SK-N-SH (cell line): ENCODE measurements at regions of chr18 and their contacts with region 1.

Region 1: GRCh38 chr18:23918401-23919032 is 96.0 kb upstream of the TTC39C start:
- DNase-seq: peak; percentile 54
- H3K4me3 ChIP-seq: no peak overlapping the region
- H3K27ac ChIP-seq: peak overlapping the region in 1 of 2 experiments; percentile 53; a peak in 2 of 4 replicates
- H3K4me1 ChIP-seq: no peaks in the 10 kb centered on the region
- H3K27me3 ChIP-seq: no peaks in the 10 kb centered on the region
- CTCF ChIP-seq: peak; percentile 95
- EP300 ChIP-seq: no peak
- RAD21 ChIP-seq: peak; percentile 80

Region 2: GRCh38 chr18:23887493-23887892 is 31.0 kb before region 1 on chr18:
- CTCF ChIA-PET with region 1: interaction called, 19 read pairs
- POLR2A ChIA-PET with region 1: no interaction called
- DNase-seq: peak; percentile 30
- H3K4me3 ChIP-seq: no peak overlapping the region
- H3K27ac ChIP-seq: no peak overlapping the region; a peak in 1 of 4 replicates
- H3K4me1 ChIP-seq: peaks cover 6 to 34% of the 10 kb centered on the region in 2 experiments; a peak in 3 of 4 replicates
- H3K27me3 ChIP-seq: no peaks in the 10 kb centered on the region
- CTCF ChIP-seq: no peak
- EP300 ChIP-seq: peak in 1 of 2 experiments; percentile 47; a peak in 2 of 4 replicates
- RAD21 ChIP-seq: no peak

Region 3: DNA sequence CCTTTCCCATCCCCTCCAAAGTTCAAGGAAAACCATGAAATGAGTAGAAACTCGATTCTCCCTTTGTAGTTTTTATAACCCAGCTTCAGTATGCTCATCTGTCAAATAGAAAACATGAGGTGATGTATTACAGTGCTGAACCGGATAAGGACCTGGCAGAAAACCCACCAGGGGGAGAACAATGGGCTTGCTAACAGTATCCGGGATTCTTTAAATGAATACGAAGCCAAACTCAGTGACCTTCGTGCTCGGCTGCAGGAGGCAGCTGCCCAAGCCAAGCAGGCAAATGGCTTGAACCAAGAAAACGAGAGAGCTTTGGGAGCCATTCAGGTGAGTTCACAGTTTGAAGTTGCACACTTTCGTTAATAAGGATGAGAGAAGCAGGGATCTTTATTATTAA is 17.5 kb before region 1 on chr18:
- CTCF ChIA-PET with region 1: interaction called, 11 read pairs
- POLR2A ChIA-PET with region 1: no interaction called
- DNase-seq: no peak
- H3K4me3 ChIP-seq: no peak overlapping the region
- H3K27ac ChIP-seq: no peak overlapping the region
- H3K4me1 ChIP-seq: no peaks in the 10 kb centered on the region; a peak in 1 of 4 replicates
- H3K27me3 ChIP-seq: no peaks in the 10 kb centered on the region
- CTCF ChIP-seq: no peak
- EP300 ChIP-seq: no peak
- RAD21 ChIP-seq: no peak

Region 4: DNA sequence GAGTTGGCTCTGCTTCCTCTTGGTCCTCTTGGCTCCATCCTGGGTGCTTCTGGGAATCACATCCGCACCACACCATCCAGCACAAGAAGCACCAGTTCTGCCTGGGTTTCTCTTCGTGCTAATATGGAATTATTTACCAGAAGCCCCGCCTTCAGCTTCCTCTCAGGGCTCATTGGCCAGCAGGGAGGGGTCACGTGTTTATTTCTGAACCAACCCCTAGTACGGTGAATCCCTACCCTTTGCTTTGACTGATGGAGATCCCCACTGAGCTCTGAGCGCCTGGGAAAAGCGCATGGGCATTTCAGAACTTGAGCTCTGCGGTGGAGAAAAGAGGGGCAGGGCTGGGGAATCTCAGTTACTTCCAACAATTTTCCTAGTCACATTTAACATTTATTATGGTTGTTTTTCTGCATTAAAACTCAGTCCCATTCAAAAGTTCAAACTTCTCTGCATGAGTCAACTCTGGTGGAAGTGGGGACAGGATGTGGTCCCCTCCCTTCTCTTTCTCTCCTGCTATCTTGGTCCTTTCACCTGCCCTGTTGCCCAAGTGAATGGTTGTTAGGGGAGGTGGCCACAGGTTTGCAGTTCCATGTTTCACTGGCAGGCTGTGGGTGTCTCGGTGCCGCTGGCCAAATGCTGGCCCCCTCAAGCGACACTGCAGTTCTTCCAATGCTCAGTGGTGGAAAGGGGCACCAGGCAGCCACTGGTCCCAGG is 19.7 kb after region 1 on chr18:
- CTCF ChIA-PET with region 1: interaction called, 23 read pairs
- POLR2A ChIA-PET with region 1: no interaction called
- DNase-seq: no peak
- H3K4me3 ChIP-seq: no peak overlapping the region
- H3K27ac ChIP-seq: no peak overlapping the region
- H3K4me1 ChIP-seq: peaks cover 17 to 20% of the 10 kb centered on the region in 2 experiments; a peak in 3 of 4 replicates
- H3K27me3 ChIP-seq: no peaks in the 10 kb centered on the region
- CTCF ChIP-seq: no peak
- EP300 ChIP-seq: no peak
- RAD21 ChIP-seq: no peak

Region 5: DNA sequence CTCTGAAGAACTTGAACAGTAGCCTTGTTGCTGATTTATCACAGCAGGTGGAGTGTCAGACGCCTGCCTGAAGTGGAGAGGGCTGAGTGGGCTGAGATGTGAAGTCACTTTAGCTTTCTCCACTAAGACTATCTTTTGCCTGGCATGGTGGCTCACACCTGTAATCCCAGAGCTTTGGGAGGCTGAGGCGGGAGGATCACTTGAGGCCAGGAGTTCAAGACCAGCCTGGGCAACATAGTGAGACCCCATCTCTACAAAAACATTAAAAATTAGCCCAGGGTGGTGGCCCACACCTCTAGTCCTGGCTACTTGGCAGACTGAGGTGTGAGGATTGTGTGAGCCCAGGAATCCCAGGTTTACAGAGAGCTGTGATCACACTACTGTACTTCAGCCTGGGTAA is 35.5 kb after region 1 on chr18:
- CTCF ChIA-PET with region 1: interaction called, 12 read pairs
- POLR2A ChIA-PET with region 1: no interaction called
- DNase-seq: no peak
- H3K4me3 ChIP-seq: no peak overlapping the region
- H3K27ac ChIP-seq: no peak overlapping the region
- H3K4me1 ChIP-seq: no peaks in the 10 kb centered on the region
- H3K27me3 ChIP-seq: no peaks in the 10 kb centered on the region
- CTCF ChIP-seq: no peak
- EP300 ChIP-seq: no peak
- RAD21 ChIP-seq: no peak

Region 6: DNA sequence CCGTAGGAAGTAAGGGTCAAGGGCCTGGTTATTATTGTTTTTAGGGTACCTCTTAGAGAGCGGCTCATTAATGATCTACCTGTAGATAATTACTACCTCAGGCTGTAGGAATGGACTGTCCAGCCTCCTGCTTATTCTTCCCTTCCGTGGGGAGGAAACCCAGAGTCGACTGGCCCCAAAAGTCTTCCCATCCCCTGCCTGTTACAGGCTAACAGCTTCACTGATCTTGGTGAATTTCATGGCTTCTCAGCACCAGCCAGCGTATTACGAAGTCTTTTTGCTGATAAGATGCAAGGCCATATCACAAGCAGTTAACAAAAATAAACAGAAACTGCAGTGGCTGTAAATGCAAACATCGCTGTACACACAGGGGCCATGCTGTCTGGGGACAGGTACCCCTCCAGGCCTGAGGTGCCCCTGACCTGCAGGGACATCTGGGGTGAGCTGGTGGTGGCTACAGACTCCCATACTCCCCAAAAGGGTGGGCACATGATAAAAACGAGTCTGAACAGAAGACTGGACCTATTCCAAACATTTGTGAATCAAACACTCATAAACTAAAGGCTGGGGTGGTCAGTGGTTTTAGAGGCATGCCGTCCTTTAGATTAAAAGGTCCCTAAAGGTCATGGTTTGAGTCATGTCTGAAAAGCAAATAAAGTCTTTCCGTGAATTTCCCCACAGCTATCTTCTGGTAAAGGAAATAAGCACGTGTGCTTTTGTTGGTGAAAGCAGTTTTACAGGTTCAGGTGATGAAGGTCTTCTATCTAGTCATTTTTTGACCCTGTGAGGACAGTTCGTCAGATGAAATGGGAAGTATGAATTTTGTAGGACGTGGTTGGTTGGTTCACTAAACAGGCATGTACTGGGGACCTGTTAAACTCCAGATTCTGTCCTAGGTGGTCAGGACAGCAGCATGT is 132.8 kb after region 1 on chr18:
- CTCF ChIA-PET with region 1: no interaction called
- POLR2A ChIA-PET with region 1: no interaction called
- DNase-seq: no peak
- H3K4me3 ChIP-seq: no peak overlapping the region
- H3K27ac ChIP-seq: no peak overlapping the region
- H3K4me1 ChIP-seq: peaks cover 8 to 35% of the 10 kb centered on the region in 2 experiments
- H3K27me3 ChIP-seq: no peaks in the 10 kb centered on the region
- CTCF ChIP-seq: no peak
- EP300 ChIP-seq: no peak
- RAD21 ChIP-seq: no peak